ENCODE measurements at regions of chr20 and their contacts with region 1.

Region 1: GRCh38 chr20:5100684-5101347 is 18.9 kb downstream of the PCNA start:
- DNase-seq: peak; percentile 81
- ATAC-seq: peak; percentile 93 to 94
- H3K4me3 ChIP-seq: no peak overlapping the region
- H3K27ac ChIP-seq: peak overlapping the region; percentile 11 to 54; a peak in 4 of 6 replicates
- H3K4me1 ChIP-seq: peaks cover 14% of the 10 kb centered on the region
- CTCF ChIP-seq: peak; percentile 97
- EP300 ChIP-seq: no peak
- POLR2A ChIP-seq: no peak
- RAD21 ChIP-seq: peak; percentile 94 to 95

Region 2: DNA sequence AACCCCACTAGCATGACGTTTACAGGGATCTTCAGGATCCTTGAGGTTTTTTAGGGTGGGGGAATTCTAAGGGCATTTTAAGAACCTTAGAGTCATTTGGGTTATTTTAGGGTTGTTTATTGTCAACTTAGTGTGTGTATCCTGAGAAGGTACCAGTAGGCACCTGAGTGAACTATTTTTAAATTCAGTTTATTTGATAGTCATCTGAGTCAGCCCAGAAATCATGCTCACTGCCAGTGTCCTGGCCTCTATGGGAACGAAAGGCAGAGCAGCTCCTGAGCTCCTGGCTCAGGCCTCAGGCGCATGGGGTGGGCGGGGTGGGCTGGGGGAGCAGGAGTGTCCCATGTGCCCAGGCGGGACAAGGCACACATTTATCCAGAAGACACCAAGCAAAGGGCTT is 327.1 kb before region 1 on chr20:
- CTCF ChIA-PET with region 1: interaction called, 16 read pairs
- POLR2A ChIA-PET with region 1: no interaction called
- DNase-seq: no peak
- ATAC-seq: no peak
- H3K4me3 ChIP-seq: no peak overlapping the region
- H3K27ac ChIP-seq: no peak overlapping the region
- H3K4me1 ChIP-seq: no peaks in the 10 kb centered on the region
- CTCF ChIP-seq: no peak
- EP300 ChIP-seq: no peak
- POLR2A ChIP-seq: no peak
- RAD21 ChIP-seq: no peak

Region 3: DNA sequence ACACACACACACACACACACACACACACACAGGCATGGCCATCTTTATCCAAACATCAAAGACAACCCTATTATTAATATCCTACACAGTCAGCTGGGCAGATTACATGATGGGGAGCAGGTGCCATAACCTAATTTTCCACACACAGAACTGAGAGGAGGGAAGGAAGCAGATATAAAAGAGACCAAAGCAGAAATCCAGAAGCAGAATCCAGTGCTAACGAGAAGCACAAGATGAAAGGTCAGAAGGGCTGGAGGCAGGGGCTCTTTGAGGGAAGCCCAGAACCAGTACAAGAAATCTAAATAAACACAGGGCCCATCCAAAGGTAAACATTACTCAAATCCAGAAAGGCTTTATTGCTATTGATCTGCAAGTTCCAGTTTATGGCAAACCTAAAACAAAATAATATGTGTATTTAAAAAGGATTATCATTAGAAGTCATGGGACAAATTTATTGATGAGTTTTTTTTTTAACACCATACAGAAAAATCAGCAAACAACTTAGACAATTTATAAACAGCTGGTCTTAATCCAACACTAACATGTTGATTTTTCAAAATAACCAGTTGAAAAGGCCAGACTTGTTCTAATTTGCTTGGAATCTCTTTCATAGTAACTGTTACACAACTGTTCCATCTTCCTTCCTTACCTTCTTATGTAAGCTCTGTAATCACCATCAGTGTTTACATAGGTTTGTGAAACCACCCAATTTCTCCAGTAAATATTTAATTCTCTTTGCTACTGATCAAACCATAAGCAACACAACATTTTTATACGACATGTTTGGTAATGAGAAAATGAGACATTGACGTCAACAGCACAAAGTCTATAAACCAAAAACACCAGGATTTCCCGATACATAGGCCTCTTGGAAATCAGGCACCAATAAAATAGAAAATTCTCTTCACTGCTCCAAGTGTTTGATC is 133.7 kb before region 1 on chr20:
- CTCF ChIA-PET with region 1: interaction called, 26 read pairs
- POLR2A ChIA-PET with region 1: no interaction called
- DNase-seq: peak in 1 of 2 experiments; percentile 82
- ATAC-seq: peak; percentile 50 to 67; a peak in 5 of 6 replicates
- H3K4me3 ChIP-seq: no peak overlapping the region
- H3K27ac ChIP-seq: peak overlapping the region; percentile 76 to 80
- H3K4me1 ChIP-seq: peaks cover 61% of the 10 kb centered on the region
- CTCF ChIP-seq: no peak
- EP300 ChIP-seq: peak; percentile 91 to 95; a peak in 4 of 5 replicates
- POLR2A ChIP-seq: no peak
- RAD21 ChIP-seq: 0 out of 5 replicates have a peak, but pooled peaks of 1 of the 2 experiments have one; percentile 15

Region 4: DNA sequence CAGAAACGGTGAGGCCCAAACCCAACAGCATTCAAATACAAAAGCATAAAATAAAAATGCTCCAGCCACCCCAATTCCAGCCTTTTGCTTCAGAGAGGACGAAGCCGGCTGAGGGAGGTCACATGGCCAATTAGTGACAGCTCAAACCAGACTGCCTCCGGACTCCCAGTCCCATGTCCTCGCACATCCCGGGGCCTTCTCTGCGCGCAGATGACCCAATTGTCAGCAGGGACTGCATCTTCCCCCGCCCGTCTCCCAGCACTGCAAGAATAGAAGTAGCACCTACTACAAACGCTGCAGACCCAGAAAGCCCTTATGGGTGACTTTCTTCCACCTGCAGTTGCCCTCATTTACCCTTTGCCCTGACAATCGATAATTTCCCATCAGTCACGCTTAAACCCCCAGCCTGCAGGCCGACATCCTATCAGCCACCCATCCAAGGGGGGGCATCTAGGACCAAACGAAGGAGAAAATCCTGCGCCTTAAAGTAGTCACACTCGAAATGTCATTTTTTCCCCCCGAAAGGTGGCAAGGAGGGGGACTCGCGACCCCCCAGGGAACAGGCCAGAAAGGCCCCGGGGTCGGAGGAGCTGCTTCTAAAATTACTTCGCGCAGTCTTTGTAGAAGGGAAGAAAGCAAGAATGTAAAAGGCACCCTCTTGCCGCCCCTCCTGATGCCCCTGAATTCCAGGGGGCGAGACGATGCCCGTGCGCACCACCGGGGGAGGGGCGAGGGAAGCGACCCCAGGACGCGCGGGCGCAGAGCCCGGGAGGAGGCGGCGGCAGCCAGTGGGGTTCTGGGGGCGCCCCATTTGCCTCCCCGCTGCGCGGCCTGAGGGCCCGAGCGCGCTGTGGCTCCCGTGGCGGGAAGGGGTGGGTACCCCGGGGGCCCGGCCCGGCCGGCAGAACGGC is 100.3 kb before region 1 on chr20:
- CTCF ChIA-PET with region 1: interaction called, 19 read pairs
- POLR2A ChIA-PET with region 1: no interaction called
- DNase-seq: no peak
- ATAC-seq: peak; percentile 33 to 60
- H3K4me3 ChIP-seq: peak overlapping the region; percentile 65
- H3K27ac ChIP-seq: peak overlapping the region; percentile 77 to 90
- H3K4me1 ChIP-seq: peaks cover 20% of the 10 kb centered on the region
- CTCF ChIP-seq: no peak
- EP300 ChIP-seq: no peak
- POLR2A ChIP-seq: no peak
- RAD21 ChIP-seq: no peak

Region 5: GRCh38 chr20:5056801-5057599 is 43.8 kb before region 1 on chr20:
- CTCF ChIA-PET with region 1: interaction called, 75 read pairs
- POLR2A ChIA-PET with region 1: interaction called, 3 read pairs
- DNase-seq: peak; percentile 64 to 77
- ATAC-seq: peak; percentile 88 to 91
- H3K4me3 ChIP-seq: no peak overlapping the region
- H3K27ac ChIP-seq: peak overlapping the region; percentile 24 to 60; a peak in 4 of 6 replicates
- H3K4me1 ChIP-seq: peaks cover 19% of the 10 kb centered on the region
- CTCF ChIP-seq: peak; percentile 62
- EP300 ChIP-seq: no peak
- POLR2A ChIP-seq: no peak
- RAD21 ChIP-seq: peak; percentile 51 to 55; a peak in 4 of 5 replicates

Region 6: GRCh38 chr20:5072756-5073659 is 27.8 kb before region 1 on chr20:
- CTCF ChIA-PET with region 1: interaction called, 26 read pairs
- POLR2A ChIA-PET with region 1: interaction called, 3 read pairs
- DNase-seq: peak; percentile 97
- ATAC-seq: peak; percentile 96
- H3K4me3 ChIP-seq: no peak overlapping the region
- H3K27ac ChIP-seq: peak overlapping the region; percentile 87
- H3K4me1 ChIP-seq: peaks cover 40% of the 10 kb centered on the region
- CTCF ChIP-seq: no peak
- EP300 ChIP-seq: peak; percentile 80 to 89; a peak in 3 of 5 replicates
- POLR2A ChIP-seq: peak; percentile 36
- RAD21 ChIP-seq: peak; percentile 14 to 41; a peak in 3 of 5 replicates

Region 7: DNA sequence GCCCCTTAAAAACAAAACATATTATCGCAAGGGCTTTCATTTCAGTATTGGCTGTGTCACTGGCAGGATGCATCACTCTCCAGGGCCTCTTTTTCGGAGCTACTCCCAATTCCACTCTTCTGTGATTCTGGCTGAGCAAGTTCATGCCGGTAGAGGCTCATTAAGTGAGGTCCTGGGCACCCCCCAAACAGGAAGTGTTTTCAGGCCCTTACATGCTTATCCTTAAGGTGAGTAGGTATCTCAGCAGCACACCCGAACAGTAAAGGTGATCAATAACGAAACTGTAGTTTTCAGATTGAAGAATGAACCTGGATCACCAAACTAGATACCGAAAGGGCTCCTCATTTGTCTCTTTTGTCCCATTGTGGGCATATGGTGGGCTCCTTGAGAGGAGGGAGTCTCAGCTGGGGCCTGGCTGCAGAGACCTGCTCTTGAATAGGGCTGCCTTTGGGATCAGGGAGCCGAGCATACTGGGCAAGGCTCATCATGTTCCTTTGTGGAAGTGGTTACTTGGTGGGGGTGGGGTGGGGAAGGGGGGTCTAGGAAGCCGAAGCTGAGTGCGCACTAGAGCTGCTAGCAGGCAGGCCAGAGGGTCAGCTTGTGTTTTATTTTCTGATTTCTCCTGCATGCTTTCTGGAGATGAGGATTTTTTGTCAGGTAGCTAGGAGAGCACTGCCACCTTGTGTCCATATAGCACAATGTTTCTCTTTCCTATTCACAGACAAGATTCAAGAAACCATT is 91.2 kb after region 1 on chr20:
- CTCF ChIA-PET with region 1: interaction called, 20 read pairs
- POLR2A ChIA-PET with region 1: no interaction called
- DNase-seq: peak; percentile 81 to 89
- ATAC-seq: peak; percentile 72 to 87
- H3K4me3 ChIP-seq: no peak overlapping the region
- H3K27ac ChIP-seq: peak overlapping the region in 1 of 2 experiments; percentile 35; a peak in 1 of 6 replicates
- H3K4me1 ChIP-seq: 0 out of 3 replicates have a peak, but pooled peaks cover 3% of the 10 kb centered on the region
- CTCF ChIP-seq: peak; percentile 96
- EP300 ChIP-seq: no peak
- POLR2A ChIP-seq: no peak
- RAD21 ChIP-seq: peak; percentile 92 to 94